Aorta (tissue), 5 donors: ENCODE measurements at regions of chr14 and their contacts with region 1.

Region 1: GRCh38 chr14:55129428-55130195 is 560 bp downstream of the LGALS3 start:
- DNase-seq: peak; percentile 88 to 91
- ATAC-seq: peak; percentile 86
- H3K4me3 ChIP-seq: peak overlapping the region; percentile 45 to 87
- H3K27ac ChIP-seq: peak overlapping the region; percentile 68 to 72
- H3K4me1 ChIP-seq: no peaks in the 10 kb centered on the region
- H3K27me3 ChIP-seq: peaks cover 0 to 1% of the 10 kb centered on the region in 2 donors

Region 2: DNA sequence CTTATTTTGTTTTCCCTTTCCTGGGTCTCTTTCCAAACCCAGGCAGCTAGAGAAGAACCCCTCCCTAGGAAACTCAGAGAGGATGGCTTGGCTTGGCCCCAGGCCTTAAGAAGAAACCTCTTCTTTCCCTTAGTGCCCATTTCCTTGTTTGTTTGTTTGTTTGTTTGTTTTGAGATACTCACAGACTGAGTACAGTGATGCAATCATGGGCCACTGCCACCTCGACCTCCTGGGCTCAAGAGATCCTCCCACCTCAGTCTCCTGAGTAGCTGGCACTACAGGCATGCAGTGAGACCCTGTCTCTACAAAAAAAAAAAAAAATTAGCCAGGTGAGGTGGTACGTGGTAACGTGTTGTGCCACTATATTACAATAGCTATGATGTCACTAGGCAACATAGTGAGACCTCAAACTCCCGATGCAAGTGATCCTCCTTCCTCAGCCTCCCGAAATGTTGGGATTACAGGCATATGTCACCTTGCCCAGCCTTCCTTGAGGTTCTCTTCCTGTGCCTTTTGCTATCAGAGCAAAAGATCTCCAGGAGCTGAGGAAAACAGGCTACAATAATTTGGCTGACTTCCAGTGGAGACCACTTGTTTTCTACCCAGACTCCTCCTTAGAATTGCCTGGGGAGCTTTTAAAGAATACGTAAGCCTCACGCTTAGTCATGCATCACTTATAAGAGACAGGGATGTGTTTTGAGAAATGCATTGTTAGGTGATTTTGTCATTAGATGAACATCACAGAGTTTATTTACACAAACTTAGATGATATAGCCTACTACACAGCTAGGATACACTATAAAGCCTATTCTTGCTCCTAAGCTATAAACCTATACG is 35.1 kb before region 1 on chr14:
- intact Hi-C with region 1: loop called (anchors 5 kb)
- DNase-seq: no peak
- ATAC-seq: no peak
- H3K4me3 ChIP-seq: no peak overlapping the region
- H3K27ac ChIP-seq: no peak overlapping the region
- H3K4me1 ChIP-seq: no peaks in the 10 kb centered on the region
- H3K27me3 ChIP-seq: no peaks in the 10 kb centered on the region

Region 3: DNA sequence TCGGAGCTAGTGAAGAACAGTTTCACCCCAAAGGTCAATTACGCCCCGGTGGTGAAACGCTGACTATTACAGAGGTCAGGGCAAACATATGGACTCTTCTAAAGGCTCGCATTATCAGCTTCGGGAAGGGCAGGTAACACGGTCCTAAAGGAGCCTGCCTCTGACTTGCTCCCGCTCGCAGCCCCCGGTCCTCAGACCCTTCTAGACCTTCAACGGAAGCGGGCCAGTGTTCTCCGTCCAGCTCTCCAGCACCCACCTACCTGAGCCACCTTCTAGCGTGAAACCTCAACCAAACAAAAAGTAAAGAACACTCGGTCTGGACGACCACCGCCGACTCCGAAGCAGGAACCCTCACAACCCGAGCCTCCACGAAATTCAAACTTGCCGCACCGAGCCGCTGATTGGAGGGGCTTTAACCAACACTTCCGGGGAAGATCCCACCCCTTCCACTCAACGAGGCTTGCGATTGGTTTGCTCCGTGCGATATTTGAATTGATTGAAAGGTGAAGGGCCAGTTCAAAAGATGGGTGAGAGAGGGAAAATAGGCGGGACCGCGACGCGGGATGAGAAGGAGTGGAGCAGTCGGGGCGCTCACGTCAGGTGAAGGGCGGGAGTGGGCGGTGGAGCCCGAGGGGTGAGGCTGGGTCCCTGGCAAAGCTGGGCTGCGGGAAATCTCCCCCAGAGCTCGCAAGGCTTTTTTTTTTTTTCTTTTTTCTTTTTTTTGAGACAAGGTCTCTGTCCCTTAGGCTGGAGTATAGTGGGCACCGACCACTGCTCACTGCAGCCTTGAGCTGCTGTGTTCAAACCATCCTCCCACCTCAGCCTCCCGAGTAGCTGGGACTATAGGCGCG is 61.8 kb after region 1 on chr14 and contains the start of gene DLGAP5:
- intact Hi-C with region 1: no loop called
- DNase-seq: peak; percentile 93 to 95
- ATAC-seq: peak; percentile 97
- H3K4me3 ChIP-seq: peak within 1 kb of the TSS; percentile 51 to 56
- H3K27ac ChIP-seq: no peak within 1 kb of the TSS
- H3K4me1 ChIP-seq: no peaks in the 10 kb centered on the region
- H3K27me3 ChIP-seq: no peaks in the 10 kb centered on the region
- total RNA-seq, gene DLGAP5: 0.63 TPM in 1 of 2 donors, not detected in the other

Region 4: DNA sequence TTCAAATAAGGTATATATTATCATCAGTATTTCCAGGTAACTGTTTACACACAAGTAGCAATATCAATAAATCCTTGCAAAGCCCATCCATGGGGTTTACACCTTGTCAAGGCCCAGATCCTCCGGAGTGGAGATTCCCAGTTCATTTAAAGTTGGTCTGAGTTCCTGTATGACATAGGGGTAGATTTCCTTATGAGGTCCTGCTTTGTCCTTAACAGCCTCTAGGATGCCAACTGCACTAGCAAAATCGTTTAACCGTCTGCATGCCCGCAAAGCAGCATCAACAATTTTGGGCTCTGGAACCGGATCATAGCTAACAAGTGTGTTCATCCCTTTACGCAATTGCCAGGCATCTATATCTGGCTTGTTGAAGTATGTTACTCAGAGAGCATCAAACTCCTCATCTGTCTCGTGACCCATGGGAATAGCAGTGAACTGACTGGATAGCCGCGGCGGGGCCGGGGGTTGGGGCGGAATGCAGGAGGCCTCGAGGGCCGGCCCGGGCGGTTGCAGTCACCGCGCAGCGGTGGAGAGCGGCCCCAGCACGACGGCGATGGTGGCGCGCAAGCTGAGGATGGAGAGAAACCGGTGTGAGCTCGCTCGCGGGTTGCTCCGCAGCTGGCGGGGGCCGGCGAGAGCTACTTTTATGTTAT is 111.0 kb after region 1 on chr14:
- intact Hi-C with region 1: no loop called
- DNase-seq: peak in 1 of 2 donors; percentile 74
- ATAC-seq: no peak
- H3K4me3 ChIP-seq: no peak overlapping the region
- H3K27ac ChIP-seq: no peak overlapping the region
- H3K4me1 ChIP-seq: no peaks in the 10 kb centered on the region
- H3K27me3 ChIP-seq: no peaks in the 10 kb centered on the region

Region 5: DNA sequence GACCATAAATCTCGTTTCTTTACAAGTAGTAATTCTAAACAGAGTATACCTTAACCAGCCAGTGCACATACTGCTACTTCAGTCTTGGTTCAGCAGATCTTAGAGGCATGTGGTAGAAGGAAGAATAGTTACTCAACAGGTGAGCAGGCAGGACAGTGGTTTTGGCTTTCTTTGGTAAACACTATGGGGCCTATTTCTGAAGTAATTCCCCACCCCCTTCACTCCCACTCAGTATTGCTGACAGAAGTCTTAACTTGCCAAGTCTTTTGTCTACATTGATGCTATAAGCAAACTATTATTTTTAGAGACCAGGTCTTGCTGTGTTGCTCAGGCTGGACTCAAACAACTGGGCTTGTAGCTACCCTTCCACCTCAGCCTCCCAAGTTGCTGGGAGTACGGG is 210.2 kb after region 1 on chr14:
- intact Hi-C with region 1: no loop called
- DNase-seq: no peak
- ATAC-seq: no peak
- H3K4me3 ChIP-seq: no peak overlapping the region
- H3K27ac ChIP-seq: no peak overlapping the region
- H3K4me1 ChIP-seq: no peaks in the 10 kb centered on the region
- H3K27me3 ChIP-seq: no peaks in the 10 kb centered on the region

Region 6: DNA sequence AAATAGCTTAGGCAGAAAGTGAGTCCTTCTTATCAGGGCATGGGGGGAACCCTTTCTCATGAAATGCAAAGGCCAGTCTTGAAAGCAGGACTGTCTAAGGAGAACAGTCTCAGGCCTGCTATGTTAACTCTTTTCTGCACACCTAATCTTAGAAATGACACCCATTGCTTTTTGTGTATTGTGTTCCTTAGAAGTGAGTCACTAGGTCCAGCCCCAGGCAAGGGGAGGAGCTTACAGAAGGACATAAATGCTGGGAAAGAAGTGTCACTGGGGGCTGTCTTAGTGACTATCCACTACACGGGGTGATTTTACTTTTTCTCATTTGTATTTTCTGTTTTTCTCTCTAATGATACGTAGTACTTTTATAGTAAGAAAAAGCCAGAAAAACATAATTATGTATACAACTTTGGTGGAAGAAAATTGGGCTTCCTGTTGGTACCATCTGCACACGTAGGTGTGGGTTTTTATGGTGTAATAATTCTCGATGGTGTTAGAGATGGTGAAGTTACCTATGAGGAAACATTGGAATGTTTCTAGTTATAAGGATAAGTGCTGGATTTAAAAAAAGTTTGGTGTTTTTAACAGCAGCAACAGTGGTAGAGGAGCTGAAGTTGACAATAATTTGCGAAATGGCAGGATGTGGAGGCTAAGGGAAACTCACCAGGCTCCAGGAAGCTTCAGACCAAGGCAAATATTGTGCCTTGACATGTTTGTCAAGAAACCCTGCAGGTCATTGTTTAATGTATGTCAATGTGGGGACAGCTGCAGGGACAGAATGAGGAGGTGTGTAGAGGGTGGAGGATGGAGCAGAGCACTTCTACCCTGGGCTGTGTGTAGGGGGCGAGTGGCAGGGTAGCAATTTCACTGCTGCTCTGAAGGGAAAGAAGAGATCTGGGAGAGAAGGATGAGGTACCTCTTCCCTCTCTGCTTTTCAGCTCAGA is 665.3 kb after region 1 on chr14:
- intact Hi-C with region 1: no loop called
- DNase-seq: no peak
- ATAC-seq: no peak
- H3K4me3 ChIP-seq: no peak overlapping the region
- H3K27ac ChIP-seq: no peak overlapping the region
- H3K4me1 ChIP-seq: no peaks in the 10 kb centered on the region
- H3K27me3 ChIP-seq: no peaks in the 10 kb centered on the region